ENCODE measurements at regions of chr5 and their contacts with region 1.

Region 1: GRCh38 chr5:102879741-102880140 is 124.6 kb downstream of the PAM start:
- DNase-seq: no peak
- ATAC-seq: no peak
- H3K4me3 ChIP-seq: no peak overlapping the region
- H3K27ac ChIP-seq: no peak overlapping the region
- H3K4me1 ChIP-seq: no peaks in the 10 kb centered on the region
- H3K27me3 ChIP-seq: no peaks in the 10 kb centered on the region
- CTCF ChIP-seq: no peak
- POLR2A ChIP-seq: no peak
- RAD21 ChIP-seq: no peak

Region 2: DNA sequence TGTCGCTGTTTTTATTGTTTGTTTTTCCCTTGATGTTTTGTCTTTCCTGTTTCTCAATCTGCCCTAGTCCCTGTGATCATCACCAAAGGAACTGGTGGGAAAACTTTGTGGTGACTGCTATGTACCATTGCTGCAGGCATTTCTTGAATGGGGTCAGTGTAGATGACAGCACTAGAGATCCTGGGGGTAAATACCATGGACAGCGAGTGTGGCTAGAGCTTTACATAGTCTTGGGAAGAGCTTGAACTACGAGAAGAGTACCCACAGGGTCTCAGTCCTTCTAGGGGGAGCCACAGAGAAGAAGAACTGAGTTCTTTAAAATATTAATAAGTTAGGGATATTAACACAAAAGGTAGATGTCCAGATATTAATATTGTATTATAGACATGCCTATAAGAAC is 14.2 kb after region 1 on chr5:
- CTCF ChIA-PET with region 1: no interaction called
- POLR2A ChIA-PET with region 1: no interaction called
- dilution Hi-C with region 1: no loop called
- in situ Hi-C with region 1: no loop called
- intact Hi-C with region 1: no loop called
- DNase-seq: no peak
- ATAC-seq: no peak
- H3K4me3 ChIP-seq: no peak overlapping the region
- H3K27ac ChIP-seq: no peak overlapping the region
- H3K4me1 ChIP-seq: no peaks in the 10 kb centered on the region
- H3K27me3 ChIP-seq: no peaks in the 10 kb centered on the region
- CTCF ChIP-seq: no peak
- POLR2A ChIP-seq: no peak
- RAD21 ChIP-seq: no peak

Region 3: DNA sequence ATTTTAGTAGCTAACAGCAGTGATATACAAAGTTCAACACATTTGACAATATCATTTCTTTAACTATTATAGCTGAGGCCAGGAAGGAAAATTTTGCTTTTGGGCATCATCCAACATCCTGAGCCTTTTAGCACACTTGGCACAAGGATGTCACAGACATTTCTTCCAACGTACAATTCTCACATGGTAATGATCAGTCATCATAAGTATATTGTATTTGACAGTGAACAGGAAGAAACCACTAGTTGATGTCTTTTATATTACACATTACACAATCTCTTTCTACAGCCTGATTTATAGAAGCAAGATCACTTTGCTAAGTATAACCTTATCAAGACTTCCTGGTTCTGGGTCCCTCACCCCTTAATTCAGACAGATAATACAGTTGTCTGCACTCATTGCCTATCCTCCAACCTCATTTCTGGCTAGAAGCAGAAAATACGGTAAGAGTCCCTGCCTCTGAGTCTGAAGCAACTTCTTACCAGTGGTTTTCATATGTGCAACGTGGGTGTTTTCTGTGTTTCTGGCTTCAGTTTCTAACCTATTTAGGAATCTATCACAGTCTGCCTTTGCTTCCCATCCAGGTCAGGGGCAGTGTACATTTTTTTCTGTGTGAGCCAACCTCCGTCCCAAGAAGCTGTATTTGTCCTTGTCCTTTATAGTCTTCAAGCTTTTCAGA is 43.2 kb after region 1 on chr5:
- CTCF ChIA-PET with region 1: no interaction called
- POLR2A ChIA-PET with region 1: no interaction called
- dilution Hi-C with region 1: no loop called
- in situ Hi-C with region 1: no loop called
- intact Hi-C with region 1: loop called (anchors 5 kb)
- DNase-seq: no peak
- ATAC-seq: no peak
- H3K4me3 ChIP-seq: no peak overlapping the region
- H3K27ac ChIP-seq: no peak overlapping the region
- H3K4me1 ChIP-seq: no peaks in the 10 kb centered on the region
- H3K27me3 ChIP-seq: no peaks in the 10 kb centered on the region
- CTCF ChIP-seq: no peak
- POLR2A ChIP-seq: no peak
- RAD21 ChIP-seq: no peak

Region 4: DNA sequence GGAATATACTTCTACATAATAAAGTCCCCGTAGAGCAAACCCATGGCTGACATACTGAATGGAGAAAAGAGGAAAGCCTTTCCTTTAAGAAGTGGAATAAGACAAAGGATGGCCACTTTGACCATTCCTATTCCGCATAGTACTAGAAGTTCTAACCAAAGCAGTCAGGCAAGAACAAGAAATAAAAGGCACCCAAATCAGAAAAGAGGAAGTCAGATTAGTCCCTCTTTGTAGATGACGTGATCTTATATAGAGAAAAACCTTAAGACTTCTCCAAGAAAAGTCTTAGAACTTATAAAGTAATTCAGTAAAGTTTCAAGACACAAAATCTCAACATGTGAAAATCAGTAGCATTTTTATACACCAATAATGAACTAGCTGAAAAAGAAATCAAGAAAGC is 106.3 kb after region 1 on chr5:
- CTCF ChIA-PET with region 1: no interaction called
- POLR2A ChIA-PET with region 1: no interaction called
- dilution Hi-C with region 1: no loop called
- in situ Hi-C with region 1: no loop called
- intact Hi-C with region 1: no loop called
- DNase-seq: no peak
- ATAC-seq: no peak
- H3K4me3 ChIP-seq: no peak overlapping the region
- H3K27ac ChIP-seq: no peak overlapping the region
- H3K4me1 ChIP-seq: no peaks in the 10 kb centered on the region
- H3K27me3 ChIP-seq: no peaks in the 10 kb centered on the region
- CTCF ChIP-seq: no peak
- POLR2A ChIP-seq: no peak
- RAD21 ChIP-seq: no peak